Panc1 (cell line): ENCODE measurements at regions of chr6 and their contacts with region 1.

Region 1: DNA sequence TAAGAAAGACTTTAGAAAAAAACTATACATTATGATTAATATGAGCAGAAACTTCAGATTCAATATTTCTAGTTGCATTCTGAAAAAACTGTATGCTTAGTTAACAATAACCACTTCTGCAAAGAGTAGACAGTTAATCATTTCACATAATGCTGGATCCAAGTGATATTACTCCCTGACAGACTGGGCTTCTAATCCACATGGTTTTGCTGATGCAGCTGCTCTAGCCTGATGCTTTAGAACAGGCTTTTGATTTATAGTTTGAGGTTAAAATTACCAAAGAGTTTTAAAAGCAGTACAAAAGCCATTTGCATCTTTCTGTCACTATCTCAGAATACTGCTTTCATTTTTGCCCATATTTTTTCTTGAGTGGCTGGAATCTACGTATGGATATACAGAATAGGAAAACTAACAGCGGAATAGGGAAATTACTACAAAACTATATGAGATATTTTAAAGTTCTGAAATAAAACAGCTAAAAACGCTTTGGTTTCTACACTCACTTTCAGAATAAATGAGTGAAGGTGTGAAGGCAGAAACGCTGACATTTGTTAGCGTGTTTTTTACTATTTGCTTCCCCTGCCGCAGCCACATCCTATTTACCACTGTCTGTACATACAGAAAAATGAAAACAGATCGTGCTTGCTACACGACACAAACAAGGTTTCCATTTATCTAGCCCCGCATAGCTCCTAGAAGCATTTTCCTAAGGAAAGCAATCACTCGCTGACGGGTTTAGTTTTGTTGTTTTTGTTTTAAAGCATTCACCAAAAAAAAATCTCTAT is 61.7 kb downstream of the METTL24 start:
- DNase-seq: no peak
- ATAC-seq: no peak
- H3K4me3 ChIP-seq: no peak overlapping the region
- H3K27ac ChIP-seq: no peak overlapping the region
- H3K4me1 ChIP-seq: no peaks in the 10 kb centered on the region
- H3K27me3 ChIP-seq: peaks cover 57% of the 10 kb centered on the region
- CTCF ChIP-seq: no peak

Region 2: DNA sequence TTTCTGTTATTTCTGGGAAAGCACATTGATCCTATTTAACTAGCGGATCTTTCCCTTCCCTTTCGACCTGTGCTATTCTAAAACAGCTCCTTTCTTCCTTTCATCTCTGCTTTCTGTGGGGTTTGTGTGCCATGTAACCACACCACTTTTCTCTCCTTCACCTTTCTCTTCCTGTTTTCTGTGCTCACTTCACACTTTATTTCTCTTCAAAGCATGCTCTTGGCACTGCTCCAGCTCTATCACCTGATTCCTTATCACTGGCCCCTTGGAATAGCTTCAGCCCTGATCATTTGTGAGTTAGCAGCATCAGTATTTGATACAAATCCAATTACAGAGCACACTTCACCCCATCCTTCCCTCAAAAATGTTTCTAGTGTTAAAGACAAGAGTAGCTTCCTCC is 69.8 kb after region 1 on chr6:
- CTCF ChIA-PET with region 1: no interaction called
- POLR2A ChIA-PET with region 1: no interaction called
- in situ Hi-C with region 1: loop called (anchors 5 kb)
- intact Hi-C with region 1: no loop called
- DNase-seq: no peak
- ATAC-seq: no peak
- H3K4me3 ChIP-seq: no peak overlapping the region
- H3K27ac ChIP-seq: no peak overlapping the region
- H3K4me1 ChIP-seq: no peaks in the 10 kb centered on the region
- H3K27me3 ChIP-seq: peaks cover 76% of the 10 kb centered on the region
- CTCF ChIP-seq: no peak

Region 3: GRCh38 chr6:110439356-110439755 is 142.9 kb after region 1 on chr6:
- CTCF ChIA-PET with region 1: no interaction called
- POLR2A ChIA-PET with region 1: no interaction called
- in situ Hi-C with region 1: no loop called
- intact Hi-C with region 1: no loop called
- DNase-seq: no peak
- ATAC-seq: no peak
- H3K4me3 ChIP-seq: no peak overlapping the region
- H3K27ac ChIP-seq: no peak overlapping the region
- H3K4me1 ChIP-seq: no peaks in the 10 kb centered on the region
- H3K27me3 ChIP-seq: peaks cover 30% of the 10 kb centered on the region
- CTCF ChIP-seq: no peak